Left cardiac atrium (tissue), 4 donors: ENCODE measurements at regions of chr9 and their contacts with region 1.

Region 1: DNA sequence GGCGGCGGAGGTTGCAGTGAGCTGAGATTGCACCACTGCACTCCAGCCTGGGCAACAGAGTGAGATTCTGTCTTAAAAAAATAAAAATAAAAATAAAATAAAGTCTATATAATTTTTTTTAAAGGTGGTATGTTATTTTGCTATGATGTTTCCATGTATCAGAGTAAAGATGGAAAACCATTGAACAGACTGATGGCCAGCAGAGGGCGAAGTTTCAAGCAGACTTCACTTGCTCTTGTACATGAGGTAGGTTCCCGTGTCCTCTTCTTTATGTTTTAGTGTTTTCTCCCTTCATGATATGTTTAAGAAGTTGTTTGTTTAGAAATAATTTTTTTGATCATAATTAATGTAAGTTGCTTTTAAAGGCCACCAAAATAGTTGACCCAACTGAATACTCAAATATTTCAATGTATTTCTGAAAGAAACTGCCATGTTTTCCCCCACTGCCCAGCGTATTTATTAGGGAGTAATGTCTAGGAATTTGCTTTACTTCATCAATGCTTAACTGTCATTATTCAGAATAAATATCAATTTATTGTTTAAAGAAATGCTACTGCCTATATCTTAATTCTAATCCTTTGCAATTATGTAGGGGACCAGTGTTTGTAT is 146.4 kb downstream of the HACD4 start:
- DNase-seq: peak; percentile 61
- ATAC-seq: no peak

Region 2: DNA sequence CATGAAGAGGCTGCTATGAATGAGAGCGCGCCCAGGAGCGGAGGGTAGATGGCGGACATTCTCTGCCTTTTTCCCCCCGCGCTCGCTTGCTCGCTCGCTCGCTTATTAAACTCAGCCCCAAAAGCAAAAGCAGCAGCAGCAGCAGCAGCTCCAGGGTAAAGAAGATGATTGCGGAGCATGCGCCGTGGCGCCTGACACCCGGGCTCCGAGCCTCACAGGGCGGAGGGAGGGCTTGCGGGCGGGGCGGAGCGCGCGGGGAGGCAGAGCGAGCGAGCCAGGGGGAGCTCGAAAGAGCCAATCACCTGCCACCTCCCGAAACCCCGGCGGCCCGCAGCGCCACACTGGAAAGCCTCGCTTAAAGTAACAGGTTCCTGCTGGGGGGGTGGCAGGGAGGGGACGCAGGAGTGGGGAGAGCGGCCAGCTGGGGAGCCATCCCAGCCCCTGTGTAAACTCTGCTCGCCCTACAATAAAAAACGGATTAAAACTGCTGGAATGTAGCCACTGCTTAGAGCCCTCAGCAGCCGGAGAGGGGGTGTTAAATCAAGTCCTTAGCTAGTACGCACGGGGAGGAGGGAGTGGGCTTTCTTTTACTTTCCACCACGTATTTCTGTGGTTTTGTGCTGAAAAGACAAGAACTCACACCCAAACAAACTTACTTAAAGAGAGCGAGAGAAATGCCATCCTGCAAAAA is 262.6 kb before region 1 on chr9 and contains the start of gene MLLT3:
- intact Hi-C with region 1: loop called in 1 of 2 experiments (anchors 10 kb)
- DNase-seq: peak; percentile 97
- ATAC-seq: peak; percentile 95 to 98
- total RNA-seq, gene MLLT3: 5.3 to 10.2 TPM

Region 3: GRCh38 chr9:20835364-20836286 is 49.5 kb before region 1 on chr9:
- intact Hi-C with region 1: no loop called
- DNase-seq: no peak
- ATAC-seq: peak in 1 of 2 donors; percentile 34

Region 4: DNA sequence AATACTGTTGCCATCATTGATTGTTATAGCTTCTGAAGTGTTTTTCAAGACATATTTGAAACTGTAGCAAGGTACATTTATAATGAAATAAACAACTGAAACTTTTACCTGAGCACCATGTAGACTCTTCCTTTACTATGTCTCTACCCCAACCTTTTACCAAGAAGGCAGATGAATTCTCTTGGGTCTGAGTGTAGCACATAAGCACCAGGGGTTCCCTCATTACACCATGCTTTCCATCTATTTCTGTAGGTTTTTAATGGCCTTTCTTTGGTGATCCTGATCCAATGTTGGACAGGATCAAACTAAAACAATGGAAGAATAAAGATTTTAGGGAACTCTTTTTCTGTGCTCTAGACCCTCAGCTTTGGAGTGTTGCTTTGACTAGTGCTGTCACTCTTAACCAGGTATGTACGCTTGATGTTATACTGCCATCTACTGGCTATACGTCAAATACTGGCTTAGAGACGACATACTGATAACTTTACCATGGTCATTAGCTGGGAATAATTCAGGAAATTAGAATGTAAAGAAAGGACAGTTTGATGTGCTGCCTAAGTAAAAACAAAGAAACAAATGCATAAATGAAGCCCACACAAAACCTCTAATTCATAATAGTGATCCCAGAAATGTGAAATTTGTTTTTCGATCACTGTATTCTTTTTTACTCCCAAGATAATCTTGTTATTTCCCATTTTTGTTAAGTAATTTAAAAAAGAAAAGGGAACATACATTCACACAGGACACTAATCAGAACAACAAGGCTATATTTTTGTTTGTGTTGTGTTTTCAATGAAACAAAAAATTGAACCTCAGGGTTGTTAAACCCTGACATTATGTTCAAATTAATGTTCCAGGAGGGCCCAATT is 225.9 kb after region 1 on chr9:
- intact Hi-C with region 1: loop called in 1 of 2 experiments (anchors 10 kb)
- DNase-seq: no peak
- ATAC-seq: peak; percentile 85 to 92